Mammary epithelial cell (primary cell): ENCODE measurements at regions of chr10 and their contacts with region 1.

Region 1: DNA sequence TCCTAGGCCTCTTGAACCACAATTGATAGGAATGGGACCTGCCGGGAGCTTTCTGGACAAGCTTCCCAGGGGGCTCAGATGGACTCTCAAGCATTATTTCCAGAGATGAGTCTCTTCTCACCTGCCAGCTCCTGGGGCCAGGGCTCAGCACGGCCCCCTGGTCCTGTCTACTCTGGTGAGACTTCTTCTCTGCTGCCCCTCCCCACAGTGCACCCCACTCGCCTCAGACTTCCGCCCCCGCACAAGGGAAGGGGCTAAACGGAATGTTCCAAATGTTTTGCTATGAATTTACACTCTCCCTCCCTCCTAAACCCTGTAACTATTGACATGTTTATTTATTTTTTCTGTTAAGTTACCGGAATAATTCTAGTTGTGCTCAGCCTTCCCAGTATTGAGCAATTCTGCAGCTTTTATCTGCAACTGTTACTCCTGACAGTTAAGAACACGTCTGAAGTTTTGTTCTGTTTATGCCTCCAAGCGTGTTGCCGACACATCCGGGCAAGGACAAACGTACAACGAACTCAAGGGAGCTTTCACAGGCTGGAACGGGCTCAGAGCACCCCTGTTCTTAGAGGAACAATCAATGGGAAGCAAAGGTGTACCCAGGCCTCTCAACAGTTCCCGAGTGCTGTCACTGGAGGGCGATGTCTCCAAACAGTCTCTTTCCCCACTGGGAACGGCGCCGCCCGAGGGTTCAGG is 55.2 kb downstream of the FHIP2A start:
- DNase-seq: peak; percentile 74
- H3K4me3 ChIP-seq: no peak overlapping the region
- H3K27ac ChIP-seq: no peak overlapping the region
- H3K4me1 ChIP-seq: peaks cover 4% of the 10 kb centered on the region
- H3K27me3 ChIP-seq: no peaks in the 10 kb centered on the region
- CTCF ChIP-seq: peak; percentile 93 to 96

Region 2: GRCh38 chr10:114780610-114781184 is 96.1 kb before region 1 on chr10:
- CTCF ChIA-PET with region 1: no interaction called
- dilution Hi-C with region 1: no loop called
- in situ Hi-C with region 1: no loop called
- intact Hi-C with region 1: no loop called
- DNase-seq: no peak
- H3K4me3 ChIP-seq: no peak overlapping the region
- H3K27ac ChIP-seq: peak overlapping the region; percentile 75
- H3K4me1 ChIP-seq: peaks cover 24% of the 10 kb centered on the region
- H3K27me3 ChIP-seq: no peaks in the 10 kb centered on the region
- CTCF ChIP-seq: no peak

Region 3: GRCh38 chr10:114937962-114938855 is 61.5 kb after region 1 on chr10 and contains the start of gene TRUB1:
- CTCF ChIA-PET with region 1: interaction called, 7 read pairs
- dilution Hi-C with region 1: no loop called
- in situ Hi-C with region 1: no loop called
- intact Hi-C with region 1: loop called (anchors 1 kb)
- DNase-seq: peak; percentile 92
- H3K4me3 ChIP-seq: peak within 1 kb of the TSS; percentile 64 to 79 (median 75)
- H3K27ac ChIP-seq: peak within 1 kb of the TSS; percentile 75
- H3K4me1 ChIP-seq: peaks cover 19% of the 10 kb centered on the region
- H3K27me3 ChIP-seq: no peaks in the 10 kb centered on the region
- CTCF ChIP-seq: no peak
- total RNA-seq, gene TRUB1: 33.7 to 35.0 TPM

Region 4: DNA sequence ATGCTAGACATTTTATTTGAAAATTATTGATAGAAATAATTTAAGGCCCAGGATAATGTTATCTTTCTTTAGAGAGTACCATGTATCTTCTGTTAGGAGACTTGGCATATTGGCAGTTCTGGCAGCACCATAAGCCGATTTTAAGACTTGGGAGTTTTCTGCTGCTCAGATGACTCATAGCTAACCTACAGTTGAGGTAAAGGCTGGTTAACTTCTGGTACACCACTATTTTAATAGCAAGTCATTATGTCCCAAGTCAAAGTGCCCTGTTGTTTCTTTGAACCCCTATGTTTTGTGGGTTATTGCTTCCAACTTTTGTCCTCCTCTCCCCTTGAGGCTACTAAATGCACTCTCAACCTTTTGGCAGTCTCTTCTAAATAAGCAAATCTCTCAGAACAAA is 241.6 kb after region 1 on chr10:
- CTCF ChIA-PET with region 1: no interaction called
- dilution Hi-C with region 1: no loop called
- in situ Hi-C with region 1: loop called in 1 of 2 experiments (anchors 25 kb)
- intact Hi-C with region 1: no loop called
- DNase-seq: peak; percentile 24
- H3K4me3 ChIP-seq: no peak overlapping the region
- H3K27ac ChIP-seq: no peak overlapping the region
- H3K4me1 ChIP-seq: no peaks in the 10 kb centered on the region
- H3K27me3 ChIP-seq: no peaks in the 10 kb centered on the region
- CTCF ChIP-seq: no peak

Region 5: GRCh38 chr10:115129752-115130151 is 253.0 kb after region 1 on chr10:
- CTCF ChIA-PET with region 1: no interaction called
- dilution Hi-C with region 1: no loop called
- in situ Hi-C with region 1: loop called (anchors 5 to 25 kb)
- intact Hi-C with region 1: loop called (anchors 1 kb)
- DNase-seq: peak; percentile 4
- H3K4me3 ChIP-seq: no peak overlapping the region
- H3K27ac ChIP-seq: no peak overlapping the region
- H3K4me1 ChIP-seq: no peaks in the 10 kb centered on the region
- H3K27me3 ChIP-seq: no peaks in the 10 kb centered on the region
- CTCF ChIP-seq: peak in 1 of 2 donors; percentile 11

Region 6: GRCh38 chr10:115417585-115418265 is 541.0 kb after region 1 on chr10:
- CTCF ChIA-PET with region 1: no interaction called
- dilution Hi-C with region 1: no loop called
- in situ Hi-C with region 1: no loop called
- intact Hi-C with region 1: loop called (anchors 1 kb)
- DNase-seq: peak; percentile 45
- H3K4me3 ChIP-seq: no peak overlapping the region
- H3K27ac ChIP-seq: no peak overlapping the region
- H3K4me1 ChIP-seq: no peaks in the 10 kb centered on the region
- H3K27me3 ChIP-seq: no peaks in the 10 kb centered on the region
- CTCF ChIP-seq: peak; percentile 81 to 90